ENCODE measurements at regions of chr6 and their contacts with region 1.

Region 1: DNA sequence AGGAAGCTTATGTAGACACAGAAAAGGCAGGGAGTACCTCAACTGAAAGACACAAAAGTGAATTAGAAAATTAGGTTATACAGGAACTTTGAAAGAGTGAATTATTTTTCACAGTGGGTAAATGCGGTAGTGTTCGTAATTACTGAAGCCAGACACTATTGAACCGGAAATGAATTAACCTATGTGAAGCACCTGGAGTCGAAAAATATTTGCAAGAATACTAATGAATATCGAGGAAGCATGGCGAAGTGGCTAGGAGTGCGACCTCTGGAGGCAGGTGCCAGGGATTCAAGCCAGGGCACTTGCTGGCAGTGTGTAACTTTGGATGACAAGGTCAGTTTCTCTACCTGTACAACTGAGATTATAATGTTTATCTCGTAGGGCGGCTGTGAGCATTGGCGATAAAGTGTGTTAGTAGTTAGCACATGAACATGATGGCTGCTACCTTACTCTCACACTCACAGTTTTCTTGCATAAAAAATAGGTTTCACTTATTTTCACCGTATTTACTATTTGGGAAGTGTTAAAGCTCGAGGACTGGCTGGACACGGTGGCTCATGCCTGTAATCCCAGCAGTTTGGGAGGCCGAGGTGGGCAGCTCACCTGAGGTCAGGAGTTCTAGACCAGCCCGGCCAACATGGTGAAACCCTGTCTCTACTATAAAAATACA is 567 bp upstream of the SLC18B1 start:
- DNase-seq: peak; percentile 85
- H3K4me3 Mint-ChIP-seq: peak overlapping the region; percentile 94
- H3K27ac Mint-ChIP-seq: no peak overlapping the region
- H3K4me1 Mint-ChIP-seq: peaks cover 11% of the 10 kb centered on the region
- H3K27me3 Mint-ChIP-seq: no peaks in the 10 kb centered on the region
- CTCF ChIP-seq: peak; percentile 64

Region 2: DNA sequence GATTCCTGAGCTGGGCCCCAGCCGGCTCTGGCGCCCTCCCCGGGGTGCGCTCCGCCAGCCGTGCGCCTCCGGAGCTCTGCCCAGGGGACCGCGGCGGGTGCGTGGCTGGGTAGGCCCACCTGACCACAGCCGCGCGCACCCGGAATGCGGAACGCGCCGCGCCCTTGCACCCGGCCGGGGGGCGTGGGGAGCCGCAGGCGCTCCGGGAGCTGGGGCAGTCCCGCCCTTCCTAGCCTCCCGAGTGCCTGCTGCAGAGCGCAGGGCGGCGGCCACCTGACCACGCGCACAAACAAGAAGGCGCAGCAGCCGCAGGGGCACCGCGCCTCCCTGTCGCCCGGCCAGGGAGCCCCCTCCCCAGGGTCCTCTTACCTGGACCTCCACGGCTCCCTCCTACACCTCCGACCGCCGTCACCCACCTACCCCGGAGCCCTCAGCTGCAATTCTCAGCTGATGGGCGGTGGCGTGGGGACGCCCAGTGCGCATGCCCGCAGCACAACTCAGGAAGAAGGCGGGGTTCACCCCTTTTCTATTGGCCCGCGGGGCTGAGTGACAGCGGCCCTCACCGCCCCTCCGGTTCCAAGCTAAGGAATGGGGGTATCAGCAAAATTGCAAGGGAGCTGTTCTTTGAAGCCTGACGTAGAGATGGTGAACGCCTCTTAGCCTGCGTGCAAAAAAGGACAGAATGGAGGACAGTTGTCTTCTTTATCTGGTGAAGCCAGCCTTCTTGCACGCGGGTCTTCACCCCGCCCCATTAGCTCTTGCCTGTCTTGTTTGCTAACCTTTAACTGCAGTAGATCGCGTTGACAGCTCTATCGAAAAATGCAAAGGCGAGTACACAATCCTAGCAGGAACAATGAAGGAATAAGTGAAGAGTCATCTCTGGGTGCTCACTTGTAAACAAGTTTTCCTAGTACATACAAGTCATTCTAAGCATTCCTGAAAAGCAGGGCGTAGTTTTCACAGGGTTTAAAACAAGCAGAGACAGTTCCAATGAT is 286.1 kb before region 1 on chr6 and contains the start of gene STX7:
- CTCF ChIA-PET with region 1: interaction called, 4 read pairs
- POLR2A ChIA-PET with region 1: interaction called, 14 read pairs
- intact Hi-C with region 1: no loop called
- DNase-seq: peak; percentile 90
- H3K4me3 Mint-ChIP-seq: peak within 1 kb of the TSS; percentile 92
- H3K27ac Mint-ChIP-seq: peak within 1 kb of the TSS; percentile 82
- H3K4me1 Mint-ChIP-seq: peaks cover 27% of the 10 kb centered on the region
- H3K27me3 Mint-ChIP-seq: no peaks in the 10 kb centered on the region
- CTCF ChIP-seq: no peak
- total RNA-seq, gene STX7: 31.3 and 33.0 TPM in 2 replicates

Region 3: GRCh38 chr6:132530293-132530974 is 268.6 kb before region 1 on chr6:
- CTCF ChIA-PET with region 1: interaction called, 8 read pairs
- POLR2A ChIA-PET with region 1: interaction called, 5 read pairs
- intact Hi-C with region 1: loop called (anchors 1 kb)
- DNase-seq: peak; percentile 78
- H3K4me3 Mint-ChIP-seq: no peak overlapping the region
- H3K27ac Mint-ChIP-seq: no peak overlapping the region
- H3K4me1 Mint-ChIP-seq: no peaks in the 10 kb centered on the region
- H3K27me3 Mint-ChIP-seq: no peaks in the 10 kb centered on the region
- CTCF ChIP-seq: peak; percentile 62

Region 4: GRCh38 chr6:132614554-132614953 is 184.4 kb before region 1 on chr6:
- CTCF ChIA-PET with region 1: no interaction called
- POLR2A ChIA-PET with region 1: no interaction called
- intact Hi-C with region 1: no loop called
- DNase-seq: peak; percentile 14
- H3K4me3 Mint-ChIP-seq: no peak overlapping the region
- H3K27ac Mint-ChIP-seq: no peak overlapping the region
- H3K4me1 Mint-ChIP-seq: peaks cover 10% of the 10 kb centered on the region
- H3K27me3 Mint-ChIP-seq: peaks cover 7% of the 10 kb centered on the region
- CTCF ChIP-seq: no peak

Region 5: DNA sequence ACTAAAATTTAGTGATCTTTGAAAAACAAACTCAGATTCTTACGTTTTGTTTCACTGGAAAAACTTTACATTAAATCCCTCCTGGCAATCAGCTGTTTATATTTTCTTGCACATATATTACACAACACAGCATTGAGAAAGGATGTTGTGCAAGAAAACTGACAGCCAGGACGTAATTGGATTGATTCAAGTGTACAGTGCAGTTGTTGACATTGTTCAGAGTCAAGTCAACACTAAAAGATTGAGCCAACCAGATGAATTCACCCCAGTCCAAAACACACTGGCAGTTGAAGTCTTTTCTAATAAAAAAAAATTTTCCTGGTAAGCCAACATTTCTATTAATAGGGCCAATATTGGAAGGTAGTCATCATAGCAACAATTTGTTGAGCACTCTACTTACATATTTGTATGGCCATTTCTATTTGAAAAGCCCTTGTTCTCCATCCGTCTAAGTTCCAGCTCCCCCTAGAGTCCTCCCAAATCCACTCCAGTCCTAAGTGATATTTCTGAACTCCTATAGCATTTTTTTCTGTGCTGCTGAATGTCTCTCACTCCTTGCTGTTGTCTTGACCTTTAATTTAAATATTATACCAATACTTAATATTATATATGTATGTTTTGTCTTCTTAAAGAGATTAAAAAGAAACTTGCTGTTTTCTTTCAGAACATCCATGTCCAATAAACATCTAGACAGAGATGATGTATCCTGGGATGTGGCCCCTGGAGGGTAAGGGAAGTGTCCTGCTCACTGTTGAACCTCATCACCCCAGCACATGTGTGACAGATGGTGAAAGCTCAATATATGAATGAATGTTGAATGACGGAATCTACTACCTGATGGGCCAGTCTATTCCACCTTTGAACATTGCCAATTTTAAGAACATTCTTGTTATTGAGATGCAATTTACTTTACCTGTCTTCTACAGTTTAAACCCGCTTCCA is 64.0 kb before region 1 on chr6:
- CTCF ChIA-PET with region 1: interaction called, 4 read pairs
- POLR2A ChIA-PET with region 1: interaction called, 10 read pairs
- intact Hi-C with region 1: loop called (anchors 2 kb)
- DNase-seq: peak; percentile 94
- H3K4me3 Mint-ChIP-seq: peak overlapping the region; percentile 59
- H3K27ac Mint-ChIP-seq: peak overlapping the region; percentile 86
- H3K4me1 Mint-ChIP-seq: peaks cover 38% of the 10 kb centered on the region
- H3K27me3 Mint-ChIP-seq: no peaks in the 10 kb centered on the region
- CTCF ChIP-seq: peak; percentile 15

Region 6: GRCh38 chr6:132780770-132781371 is 18.1 kb before region 1 on chr6:
- CTCF ChIA-PET with region 1: interaction called, 13 read pairs
- POLR2A ChIA-PET with region 1: interaction called, 5 read pairs
- intact Hi-C with region 1: no loop called
- DNase-seq: peak; percentile 21
- H3K4me3 Mint-ChIP-seq: no peak overlapping the region
- H3K27ac Mint-ChIP-seq: no peak overlapping the region
- H3K4me1 Mint-ChIP-seq: no peaks in the 10 kb centered on the region
- H3K27me3 Mint-ChIP-seq: no peaks in the 10 kb centered on the region
- CTCF ChIP-seq: peak; percentile 32